ENCODE measurements at regions of chr22 and their contacts with region 1.

Region 1: GRCh38 chr22:41171996-41172395 is 33.1 kb upstream of the L3MBTL2 start:
- DNase-seq: no peak
- H3K4me3 Mint-ChIP-seq: no peak overlapping the region
- H3K27ac Mint-ChIP-seq: no peak overlapping the region
- H3K4me1 Mint-ChIP-seq: peaks cover 15% of the 10 kb centered on the region
- H3K27me3 Mint-ChIP-seq: no peaks in the 10 kb centered on the region

Region 2: GRCh38 chr22:41152902-41153301 is 19.1 kb before region 1 on chr22:
- intact Hi-C with region 1: loop called (anchors 2 kb)
- DNase-seq: no peak
- H3K4me3 Mint-ChIP-seq: no peak overlapping the region
- H3K27ac Mint-ChIP-seq: no peak overlapping the region
- H3K4me1 Mint-ChIP-seq: no peaks in the 10 kb centered on the region
- H3K27me3 Mint-ChIP-seq: no peaks in the 10 kb centered on the region

Region 3: DNA sequence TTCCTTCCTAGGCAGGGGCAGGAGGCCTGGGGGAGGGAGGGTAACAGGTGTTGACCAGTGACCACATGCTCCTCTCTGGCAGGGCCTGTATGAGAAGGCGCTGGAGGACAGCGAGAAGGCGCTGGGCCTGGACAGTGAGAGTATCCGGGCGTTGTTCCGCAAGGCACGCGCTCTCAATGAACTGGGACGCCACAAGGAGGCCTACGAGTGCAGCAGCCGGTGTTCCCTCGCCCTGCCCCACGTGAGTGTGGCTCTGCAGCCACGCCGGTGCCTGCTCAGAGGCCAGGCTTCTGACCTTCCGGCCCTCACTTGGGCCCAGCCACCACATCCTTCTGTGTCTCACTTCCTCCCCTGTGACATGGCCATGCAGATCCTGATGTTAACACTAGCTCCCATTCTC is 155.1 kb after region 1 on chr22:
- intact Hi-C with region 1: no loop called
- DNase-seq: no peak
- H3K4me3 Mint-ChIP-seq: no peak overlapping the region
- H3K27ac Mint-ChIP-seq: no peak overlapping the region
- H3K4me1 Mint-ChIP-seq: no peaks in the 10 kb centered on the region
- H3K27me3 Mint-ChIP-seq: no peaks in the 10 kb centered on the region

Measured in activated T-helper 1 cell treated with anti-CD3 and anti-CD28 coated beads, Interleukin-12 subunit alpha, Interleukin-12 subunit beta, Interleukin-2, Interleukin-4 antibody, amounts not matched to agents 30 ng/mL and 10 ng/mL and 1 ng/mL, durations not matched to agents 14 hours and 24 hours and 36 hours (primary cell).